Vagina (tissue), 2 donors: ENCODE measurements at regions of chr7 and their contacts with region 1.

Region 1: GRCh38 chr7:101947899-101948298 is 130.5 kb downstream of the CUX1 start:
- DNase-seq: no peak
- H3K4me3 ChIP-seq: no peak overlapping the region
- H3K27ac ChIP-seq: no peak overlapping the region
- H3K4me1 ChIP-seq: peaks cover 29% of the 10 kb centered on the region
- H3K27me3 ChIP-seq: no peaks in the 10 kb centered on the region
- CTCF ChIP-seq: no peak
- POLR2A ChIP-seq: no peak

Region 2: GRCh38 chr7:101058355-101058754 is 889.5 kb before region 1 on chr7:
- intact Hi-C with region 1: no loop called
- DNase-seq: no peak
- H3K4me3 ChIP-seq: no peak overlapping the region
- H3K27ac ChIP-seq: no peak overlapping the region
- H3K4me1 ChIP-seq: no peaks in the 10 kb centered on the region
- H3K27me3 ChIP-seq: no peaks in the 10 kb centered on the region
- CTCF ChIP-seq: no peak
- POLR2A ChIP-seq: no peak

Region 3: GRCh38 chr7:101321491-101322401 is 626.2 kb before region 1 on chr7 and contains the start of gene IFT22:
- intact Hi-C with region 1: loop called (anchors 5 kb)
- DNase-seq: peak in 1 of 2 donors; percentile 90
- H3K4me3 ChIP-seq: peak within 1 kb of the TSS; percentile 74 to 77
- H3K27ac ChIP-seq: peak within 1 kb of the TSS; percentile 57
- H3K4me1 ChIP-seq: peaks cover 15% of the 10 kb centered on the region
- H3K27me3 ChIP-seq: no peaks in the 10 kb centered on the region
- CTCF ChIP-seq: no peak
- POLR2A ChIP-seq: no peak
- total RNA-seq, gene IFT22: 15.2 TPM